Sciatic nerve (tissue), 2 donors: ENCODE measurements at regions of chr10 and their contacts with region 1.

Region 1: DNA sequence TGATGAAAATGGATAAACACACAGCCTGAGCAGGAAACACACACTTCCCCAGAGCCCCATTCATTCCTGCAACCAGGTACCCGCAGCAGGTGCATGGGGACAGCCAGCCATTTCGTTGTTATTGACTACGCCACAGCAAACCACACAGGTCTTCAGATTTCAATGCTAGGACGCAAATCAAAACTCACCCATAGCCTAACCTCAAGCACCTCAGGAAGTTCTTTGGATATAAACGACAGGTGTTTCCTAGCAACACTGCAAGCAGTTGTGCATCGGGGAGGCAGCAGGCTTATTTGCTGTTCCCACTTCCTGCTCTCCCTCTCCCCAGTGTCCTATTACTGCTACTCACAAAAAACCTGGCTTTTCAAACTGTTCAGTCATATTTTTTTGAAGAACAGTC is 176.5 kb upstream of the FRMD4A start:
- DNase-seq: no peak
- ATAC-seq: no peak

Region 2: GRCh38 chr10:14645239-14645960 is 138.2 kb after region 1 on chr10:
- intact Hi-C with region 1: no loop called
- DNase-seq: no peak
- ATAC-seq: no peak

Region 3: DNA sequence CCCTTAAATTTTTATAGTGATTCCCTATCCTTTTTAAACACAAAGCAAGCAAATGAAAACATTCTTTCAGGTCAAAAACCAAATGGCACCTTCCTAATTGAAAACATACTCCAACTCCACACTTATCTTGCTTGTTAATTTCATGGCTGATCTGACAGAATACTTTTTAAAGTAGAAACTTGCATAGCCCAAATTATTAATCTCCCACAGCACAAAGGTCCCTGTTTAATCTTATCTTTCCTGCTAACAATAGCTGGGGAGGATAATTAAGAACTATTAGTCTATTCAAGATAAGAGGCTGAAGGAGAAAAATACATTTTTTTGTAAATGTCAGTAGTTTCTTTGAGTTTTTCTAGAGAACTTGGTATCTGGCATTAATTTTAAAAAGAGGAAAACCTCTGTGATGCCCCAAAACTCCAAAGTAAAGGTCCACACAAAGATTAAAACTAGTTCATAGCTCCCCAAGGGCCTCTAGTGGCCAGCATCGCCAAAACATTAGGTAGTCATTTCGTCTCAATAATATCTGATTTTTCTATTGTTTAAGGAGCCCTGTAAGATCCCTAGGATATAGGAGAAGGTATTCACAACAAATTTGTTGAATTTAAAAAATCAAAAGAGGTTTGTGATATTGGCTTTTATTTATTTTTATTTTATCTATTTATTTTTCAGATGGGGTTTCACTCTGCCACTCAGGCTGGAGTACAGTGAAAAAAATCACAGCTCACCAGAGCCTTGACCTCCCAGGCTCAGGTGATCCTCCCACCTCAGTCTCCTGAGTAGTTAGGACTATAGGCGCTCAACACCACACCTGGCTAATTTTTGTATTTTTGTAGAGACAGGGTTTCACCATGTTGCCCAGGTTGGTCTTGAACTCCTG is 315.9 kb after region 1 on chr10:
- intact Hi-C with region 1: loop called (anchors 10 kb)
- DNase-seq: no peak
- ATAC-seq: no peak